ENCODE measurements at regions of chr6 and their contacts with region 1.

Region 1: GRCh38 chr6:125314019-125314581 is 12.3 kb upstream of the HDDC2 start:
- DNase-seq: no peak
- ATAC-seq: peak; percentile 83
- H3K4me3 Mint-ChIP-seq: no peak overlapping the region
- H3K27ac Mint-ChIP-seq: no peak overlapping the region
- H3K4me1 Mint-ChIP-seq: peaks cover 2% of the 10 kb centered on the region
- H3K27me3 Mint-ChIP-seq: peaks cover 6% of the 10 kb centered on the region
- CTCF ChIP-seq: peak; percentile 70

Region 2: DNA sequence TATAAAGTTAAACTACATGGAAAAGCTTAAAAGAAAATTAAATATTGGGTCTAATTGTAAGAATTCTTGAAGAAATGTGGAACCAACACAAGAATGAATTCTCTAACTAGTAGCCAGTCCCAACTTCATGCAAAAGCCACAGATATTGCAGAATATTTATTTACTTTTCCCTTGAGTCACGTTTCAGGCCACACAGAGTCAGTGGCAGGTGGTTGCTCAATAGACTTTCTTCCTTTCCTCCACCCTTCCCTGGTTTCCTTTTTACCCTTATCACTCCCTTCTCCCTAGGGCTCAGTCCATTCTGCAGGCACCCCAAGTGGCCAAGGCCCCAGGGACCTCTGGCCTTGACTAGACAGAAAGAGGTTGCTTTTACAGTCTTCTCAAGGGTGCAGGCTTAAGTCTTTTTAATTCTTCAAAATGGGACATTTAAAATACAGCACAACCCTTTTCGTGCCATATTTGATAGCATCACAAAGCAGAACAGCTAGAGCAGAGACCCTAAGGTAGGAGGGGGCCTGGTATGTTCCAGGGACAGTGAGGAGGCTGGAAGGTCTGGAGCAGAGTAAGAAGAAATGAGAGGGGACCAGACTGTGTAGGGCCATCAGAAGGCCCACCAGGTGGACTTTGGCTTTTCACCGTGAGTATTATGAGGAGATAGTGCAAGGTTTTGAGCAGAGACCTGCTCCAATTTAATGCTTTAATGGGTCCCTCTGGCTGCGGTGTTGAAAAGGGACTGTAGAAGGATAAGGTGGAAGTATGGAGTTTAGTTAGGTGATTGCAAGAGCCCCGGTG is 77.4 kb before region 1 on chr6:
- CTCF ChIA-PET with region 1: no interaction called
- POLR2A ChIA-PET with region 1: no interaction called
- intact Hi-C with region 1: no loop called
- DNase-seq: no peak
- ATAC-seq: no peak
- H3K4me3 Mint-ChIP-seq: no peak overlapping the region
- H3K27ac Mint-ChIP-seq: no peak overlapping the region
- H3K4me1 Mint-ChIP-seq: no peaks in the 10 kb centered on the region
- H3K27me3 Mint-ChIP-seq: no peaks in the 10 kb centered on the region
- CTCF ChIP-seq: no peak

Region 3: GRCh38 chr6:125346201-125346925 is 32.3 kb after region 1 on chr6:
- CTCF ChIA-PET with region 1: interaction called, 4 read pairs
- POLR2A ChIA-PET with region 1: no interaction called
- intact Hi-C with region 1: loop called (anchors 5 kb)
- DNase-seq: no peak
- ATAC-seq: peak; percentile 78
- H3K4me3 Mint-ChIP-seq: no peak overlapping the region
- H3K27ac Mint-ChIP-seq: no peak overlapping the region
- H3K4me1 Mint-ChIP-seq: peaks cover 4% of the 10 kb centered on the region
- H3K27me3 Mint-ChIP-seq: no peaks in the 10 kb centered on the region
- CTCF ChIP-seq: no peak

Region 4: DNA sequence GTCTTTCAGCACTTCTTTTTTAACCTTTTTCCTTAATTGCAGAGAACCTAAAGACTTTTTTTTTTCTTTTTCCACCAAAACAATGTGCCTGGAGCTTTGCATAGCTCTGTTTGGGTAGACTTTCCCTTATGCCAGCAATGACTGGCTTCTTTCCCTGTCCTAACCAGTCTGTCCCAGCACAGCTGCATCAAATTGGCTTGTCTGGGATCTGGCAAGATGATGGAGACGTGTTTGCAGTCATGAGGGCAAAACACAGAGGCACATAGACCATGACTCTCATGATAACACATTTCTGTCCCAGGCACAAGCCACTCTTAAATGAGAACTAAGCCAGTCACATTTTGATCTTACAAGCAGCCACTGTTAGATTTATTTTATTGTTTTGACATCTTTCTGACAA is 451.8 kb after region 1 on chr6:
- CTCF ChIA-PET with region 1: interaction called, 27 read pairs
- POLR2A ChIA-PET with region 1: no interaction called
- intact Hi-C with region 1: loop called (anchors 1 kb)
- DNase-seq: no peak
- ATAC-seq: no peak
- H3K4me3 Mint-ChIP-seq: no peak overlapping the region
- H3K27ac Mint-ChIP-seq: no peak overlapping the region
- H3K4me1 Mint-ChIP-seq: peaks cover 3% of the 10 kb centered on the region
- H3K27me3 Mint-ChIP-seq: peaks cover 24% of the 10 kb centered on the region
- CTCF ChIP-seq: no peak

Region 5: DNA sequence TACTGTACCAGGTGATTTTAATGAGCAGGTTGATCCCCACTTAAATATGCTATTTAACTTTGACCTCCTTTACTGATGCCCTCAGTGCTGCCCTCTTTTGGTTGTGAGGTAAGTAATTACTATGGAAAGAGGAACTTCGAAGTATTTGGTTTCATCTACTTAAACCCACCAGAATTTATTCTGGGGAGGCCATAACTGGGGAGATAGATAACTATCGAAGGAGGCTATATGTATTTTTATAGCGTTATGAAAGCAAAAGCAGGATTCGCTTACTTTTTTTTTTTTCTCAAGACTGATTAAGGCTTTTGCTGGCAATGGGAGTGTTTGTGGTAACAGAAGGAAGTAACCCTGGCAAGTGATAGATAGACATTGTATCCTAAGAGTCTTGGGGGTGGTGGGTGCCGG is 856.9 kb after region 1 on chr6:
- CTCF ChIA-PET with region 1: no interaction called
- POLR2A ChIA-PET with region 1: no interaction called
- intact Hi-C with region 1: loop called (anchors 10 kb)
- DNase-seq: no peak
- ATAC-seq: no peak
- H3K4me3 Mint-ChIP-seq: no peak overlapping the region
- H3K27ac Mint-ChIP-seq: no peak overlapping the region
- H3K4me1 Mint-ChIP-seq: peaks cover 3% of the 10 kb centered on the region
- H3K27me3 Mint-ChIP-seq: no peaks in the 10 kb centered on the region
- CTCF ChIP-seq: no peak

Region 6: DNA sequence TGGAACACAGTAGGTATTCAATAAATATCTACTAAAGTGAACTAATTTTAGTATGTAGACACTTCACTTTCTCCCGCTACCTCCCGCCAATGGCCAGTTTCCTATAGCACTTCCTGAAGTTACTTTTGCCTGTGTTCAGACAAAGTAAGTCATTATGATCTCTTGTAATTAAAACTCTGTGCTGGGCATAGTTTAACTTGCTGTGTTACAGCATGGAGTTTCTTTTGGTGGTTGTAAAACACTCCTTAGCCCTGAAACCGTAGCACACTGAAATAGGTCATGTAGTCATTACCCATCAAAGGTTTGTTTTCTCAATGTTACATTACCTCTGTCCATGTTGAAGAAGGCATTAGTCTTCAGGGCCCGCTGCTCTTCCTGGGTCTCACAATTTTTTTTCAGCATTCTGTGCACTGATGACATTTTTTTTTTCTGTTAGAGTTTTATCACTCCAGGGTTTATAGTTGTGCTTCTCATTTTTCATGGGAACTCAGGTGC is 971.8 kb after region 1 on chr6:
- CTCF ChIA-PET with region 1: no interaction called
- POLR2A ChIA-PET with region 1: no interaction called
- intact Hi-C with region 1: no loop called
- DNase-seq: no peak
- ATAC-seq: no peak
- H3K4me3 Mint-ChIP-seq: no peak overlapping the region
- H3K27ac Mint-ChIP-seq: no peak overlapping the region
- H3K4me1 Mint-ChIP-seq: no peaks in the 10 kb centered on the region
- H3K27me3 Mint-ChIP-seq: no peaks in the 10 kb centered on the region
- CTCF ChIP-seq: no peak

Measured in activated B cell treated with CpG ODN at 0.5 μM for 24 hours (primary cell).